ENCODE measurements at regions of chr3 and their contacts with region 1.

Region 1: GRCh38 chr3:141402476-141403171 is 34.3 kb downstream of the ZBTB38 start:
- DNase-seq: peak; percentile 15 to 80 (median 56)
- ATAC-seq: peak; percentile 67
- H3K4me3 ChIP-seq: peak overlapping the region; percentile 70 to 85
- H3K4me3 Mint-ChIP-seq: peak overlapping the region; percentile 96
- H3K27ac ChIP-seq: peak overlapping the region; percentile 81 to 88
- H3K27ac Mint-ChIP-seq: peak overlapping the region; percentile 97
- H3K4me1 ChIP-seq: peaks cover 25% of the 10 kb centered on the region
- H3K4me1 Mint-ChIP-seq: peaks cover 70% of the 10 kb centered on the region
- H3K27me3 ChIP-seq: no peaks in the 10 kb centered on the region
- H3K27me3 Mint-ChIP-seq: no peaks in the 10 kb centered on the region
- CTCF ChIP-seq: no peak

Region 2: GRCh38 chr3:141164852-141165251 is 237.8 kb before region 1 on chr3:
- CTCF ChIA-PET with region 1: no interaction called
- POLR2A ChIA-PET with region 1: no interaction called
- intact Hi-C with region 1: no loop called
- DNase-seq: no peak
- ATAC-seq: no peak
- H3K4me3 ChIP-seq: no peak overlapping the region
- H3K4me3 Mint-ChIP-seq: no peak overlapping the region
- H3K27ac ChIP-seq: no peak overlapping the region
- H3K27ac Mint-ChIP-seq: no peak overlapping the region
- H3K4me1 ChIP-seq: no peaks in the 10 kb centered on the region
- H3K4me1 Mint-ChIP-seq: no peaks in the 10 kb centered on the region
- H3K27me3 ChIP-seq: no peaks in the 10 kb centered on the region
- H3K27me3 Mint-ChIP-seq: peaks cover 2% of the 10 kb centered on the region
- CTCF ChIP-seq: no peak

Region 3: DNA sequence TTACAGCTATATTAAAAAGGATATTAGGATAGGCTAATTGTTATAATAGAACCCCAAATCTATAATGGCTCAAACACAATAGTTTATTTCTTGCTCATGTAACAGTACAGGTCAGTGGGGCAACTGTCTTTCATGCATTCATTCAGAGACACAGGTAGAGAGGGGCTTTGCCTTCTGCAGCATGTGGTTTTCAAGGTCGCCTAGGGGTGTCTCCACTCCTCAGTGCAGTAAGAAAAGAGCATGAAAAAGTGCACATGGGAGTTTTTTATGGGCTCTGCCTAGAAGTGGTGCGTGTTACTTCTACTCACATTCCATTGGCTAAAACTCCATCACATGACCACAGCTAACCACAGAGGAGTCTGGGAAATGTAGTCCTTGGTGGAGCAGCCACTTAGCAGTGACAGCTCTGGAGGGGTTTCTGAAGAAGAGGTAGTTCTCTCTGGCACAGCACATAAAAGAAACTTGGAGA is 32.5 kb before region 1 on chr3:
- CTCF ChIA-PET with region 1: interaction called, 6 read pairs
- POLR2A ChIA-PET with region 1: interaction called, 3 read pairs
- intact Hi-C with region 1: loop called in 1 of 2 experiments (anchors 2 kb)
- DNase-seq: peak; percentile 15 to 94 (median 54)
- ATAC-seq: peak; percentile 100
- H3K4me3 ChIP-seq: no peak overlapping the region
- H3K4me3 Mint-ChIP-seq: no peak overlapping the region
- H3K27ac ChIP-seq: no peak overlapping the region
- H3K27ac Mint-ChIP-seq: no peak overlapping the region
- H3K4me1 ChIP-seq: no peaks in the 10 kb centered on the region
- H3K4me1 Mint-ChIP-seq: peaks cover 9% of the 10 kb centered on the region
- H3K27me3 ChIP-seq: no peaks in the 10 kb centered on the region
- H3K27me3 Mint-ChIP-seq: no peaks in the 10 kb centered on the region
- CTCF ChIP-seq: peak; percentile 62

Region 4: DNA sequence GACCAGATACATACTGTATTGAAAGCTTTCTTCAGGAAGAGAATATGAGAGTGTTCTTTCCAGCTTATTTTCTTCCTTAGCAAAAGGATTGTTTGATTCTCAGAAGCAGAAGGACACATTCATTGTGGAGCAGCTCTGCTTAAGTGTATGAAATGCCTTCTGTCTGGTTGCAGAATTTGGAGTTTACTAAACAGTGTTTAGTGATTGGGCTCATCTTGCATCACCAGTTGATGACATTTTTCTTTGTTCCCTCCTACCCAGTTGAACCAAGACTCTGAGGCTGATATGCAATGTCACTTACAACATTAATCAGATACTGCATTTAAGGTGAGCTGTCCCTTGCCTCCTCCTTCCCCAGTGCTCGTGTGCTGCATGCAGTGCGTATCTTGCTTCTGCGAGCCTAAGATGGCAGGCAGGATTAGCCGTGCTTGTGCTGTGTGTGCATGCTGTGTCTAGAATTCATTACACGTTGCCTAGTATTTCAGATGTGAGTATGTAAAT is 16.0 kb before region 1 on chr3:
- CTCF ChIA-PET with region 1: interaction called, 5 read pairs
- POLR2A ChIA-PET with region 1: interaction called, 10 read pairs
- intact Hi-C with region 1: no loop called
- DNase-seq: no peak
- ATAC-seq: no peak
- H3K4me3 ChIP-seq: no peak overlapping the region
- H3K4me3 Mint-ChIP-seq: peak overlapping the region; percentile 49
- H3K27ac ChIP-seq: no peak overlapping the region
- H3K27ac Mint-ChIP-seq: no peak overlapping the region
- H3K4me1 ChIP-seq: no peaks in the 10 kb centered on the region
- H3K4me1 Mint-ChIP-seq: peaks cover 11% of the 10 kb centered on the region
- H3K27me3 ChIP-seq: no peaks in the 10 kb centered on the region
- H3K27me3 Mint-ChIP-seq: no peaks in the 10 kb centered on the region
- CTCF ChIP-seq: no peak